ENCODE measurements at regions of chr7 and their contacts with region 1.

Region 1: DNA sequence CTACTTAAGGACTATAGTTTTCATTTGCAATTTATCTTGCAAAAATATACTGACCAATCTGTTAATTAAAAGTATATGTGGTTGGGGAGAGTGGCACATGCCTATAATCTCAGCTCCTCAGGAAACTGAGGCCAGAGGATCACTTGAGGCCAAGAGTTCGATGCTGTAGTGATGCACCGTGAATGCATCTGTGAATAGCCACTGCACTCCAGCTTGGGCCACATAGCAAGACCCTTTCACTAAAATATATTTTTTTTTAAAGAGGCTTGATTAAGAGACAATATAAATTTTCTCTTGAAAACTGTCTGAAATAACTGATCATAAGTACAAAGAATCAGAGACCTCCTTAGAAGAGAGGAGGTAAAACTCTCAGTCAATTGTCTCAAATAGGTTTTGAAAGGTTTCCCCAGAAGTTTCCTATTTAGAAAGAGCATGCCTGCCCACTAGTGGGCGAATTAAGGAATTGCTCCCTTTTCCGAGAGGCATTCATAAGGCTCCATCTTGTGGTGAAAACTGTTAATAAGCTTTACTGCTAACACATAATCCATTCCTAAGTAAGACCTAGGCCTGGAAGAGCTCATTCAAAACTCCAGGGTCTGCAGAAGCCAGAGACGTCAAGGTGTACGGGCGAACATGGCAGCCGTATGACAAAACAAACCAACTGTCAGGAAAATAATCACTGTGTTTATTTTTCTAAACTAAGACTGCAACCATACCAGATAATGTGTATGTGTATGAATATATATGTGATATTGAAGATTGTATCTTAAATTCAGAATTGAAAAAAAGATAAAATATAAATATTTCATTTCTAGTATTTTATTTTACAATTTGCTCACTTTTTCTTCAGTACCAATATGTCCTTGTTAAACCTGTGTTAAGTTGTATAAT is 6.8 kb upstream of the TAS2R40 start:
- DNase-seq: peak; percentile 78
- CTCF ChIP-seq: peak; percentile 99

Region 2: DNA sequence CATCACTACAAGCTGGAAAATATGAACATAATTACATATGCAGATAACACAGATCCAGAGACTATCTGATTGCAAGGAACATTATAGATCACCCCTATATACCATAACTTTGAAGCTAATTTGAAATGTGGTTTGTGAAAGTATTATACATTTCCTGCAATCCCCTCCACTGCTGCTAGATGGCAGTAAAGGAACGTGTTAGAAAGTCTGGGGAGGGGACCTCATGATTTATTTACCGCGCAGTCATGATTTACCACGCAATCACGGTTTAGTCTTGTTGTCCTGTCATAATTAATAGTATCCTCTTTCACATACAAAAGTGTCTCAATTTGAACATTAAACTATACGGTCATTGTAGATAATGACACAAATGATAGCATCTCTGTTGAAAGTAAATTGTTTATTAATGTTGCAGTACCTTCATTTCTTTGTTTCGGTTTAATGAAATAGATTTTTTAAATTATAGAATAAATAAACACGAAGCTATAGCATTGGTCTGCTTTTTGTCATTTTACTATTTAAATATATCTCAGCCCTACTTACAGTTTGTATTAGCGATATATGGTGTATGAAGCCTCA is 611.1 kb before region 1 on chr7:
- in situ Hi-C with region 1: loop called (anchors 25 kb)
- DNase-seq: peak; percentile 59
- CTCF ChIP-seq: peak; percentile 85

Region 3: GRCh38 chr7:142853739-142854371 is 361.2 kb before region 1 on chr7:
- in situ Hi-C with region 1: loop called (anchors 25 kb)
- DNase-seq: peak; percentile 87
- CTCF ChIP-seq: peak; percentile 82

Region 4: DNA sequence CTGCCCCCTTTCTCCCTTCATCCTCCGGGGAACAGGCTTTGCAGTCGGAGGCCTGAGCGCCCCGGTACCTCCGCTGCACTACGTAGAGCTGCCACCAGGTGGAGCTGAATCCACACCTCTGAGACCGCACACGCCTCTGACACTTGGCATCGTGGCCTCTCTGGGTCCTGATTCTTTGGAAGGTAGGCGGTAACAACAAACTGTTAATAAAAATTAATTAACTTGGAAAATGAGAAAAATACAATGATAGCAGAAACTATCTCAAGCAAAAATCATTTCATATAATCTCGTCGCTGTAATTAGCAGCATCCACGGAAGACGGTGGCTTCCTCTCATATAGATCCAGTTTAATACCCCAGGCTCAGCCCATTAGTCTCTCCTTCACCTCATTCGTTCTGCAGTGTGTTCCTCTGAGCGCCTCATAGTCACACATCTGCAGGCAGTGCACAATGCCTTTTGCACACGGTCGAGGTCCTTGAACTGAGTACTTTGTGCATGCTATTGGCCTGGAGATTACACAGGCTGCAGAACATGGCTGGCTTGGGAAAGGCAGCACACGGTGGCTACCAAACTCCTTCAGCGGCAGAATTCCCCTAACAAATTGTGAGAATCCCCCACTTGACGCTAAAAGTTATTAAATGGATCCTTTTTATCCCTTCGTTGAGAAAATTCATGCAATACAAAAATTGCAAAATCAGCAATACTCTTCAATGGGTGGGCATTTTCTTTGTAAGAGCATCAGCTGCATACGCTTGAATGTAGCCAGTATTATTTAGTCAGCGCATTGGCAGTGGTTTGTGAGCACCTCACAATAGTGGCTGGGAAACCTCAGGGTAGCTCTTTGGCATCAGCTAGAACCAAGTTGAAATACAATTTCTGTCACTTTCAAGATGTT is 206.8 kb before region 1 on chr7:
- in situ Hi-C with region 1: loop called (anchors 5 kb)
- DNase-seq: peak; percentile 56
- CTCF ChIP-seq: peak; percentile 98

Region 5: GRCh38 chr7:143279186-143280098 is 64.4 kb after region 1 on chr7:
- in situ Hi-C with region 1: no loop called
- DNase-seq: no peak
- CTCF ChIP-seq: no peak

Region 6: DNA sequence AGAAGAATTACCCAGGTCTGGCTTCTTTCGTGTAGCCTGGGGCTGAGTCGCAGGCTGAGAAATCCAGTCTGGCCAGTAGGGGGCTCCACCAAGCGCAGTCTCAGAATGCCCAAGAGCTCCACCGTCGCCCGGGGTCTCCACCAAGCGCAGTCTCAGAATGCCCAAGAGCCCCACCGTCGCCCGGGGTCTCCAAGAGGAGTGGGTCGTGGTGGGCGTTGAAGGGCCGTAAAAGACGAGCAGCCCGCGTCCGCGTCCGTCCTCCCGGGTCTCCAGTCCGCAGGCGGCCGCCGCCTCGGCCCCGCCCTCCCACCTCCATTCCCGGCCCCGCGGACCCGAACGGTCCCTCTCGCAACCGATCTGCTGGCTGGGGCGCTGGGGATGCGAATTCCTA is 165.2 kb after region 1 on chr7:
- in situ Hi-C with region 1: no loop called
- DNase-seq: peak; percentile 89
- CTCF ChIP-seq: peak; percentile 83